ENCODE measurements at regions of chr15 and their contacts with region 1.

Region 1: DNA sequence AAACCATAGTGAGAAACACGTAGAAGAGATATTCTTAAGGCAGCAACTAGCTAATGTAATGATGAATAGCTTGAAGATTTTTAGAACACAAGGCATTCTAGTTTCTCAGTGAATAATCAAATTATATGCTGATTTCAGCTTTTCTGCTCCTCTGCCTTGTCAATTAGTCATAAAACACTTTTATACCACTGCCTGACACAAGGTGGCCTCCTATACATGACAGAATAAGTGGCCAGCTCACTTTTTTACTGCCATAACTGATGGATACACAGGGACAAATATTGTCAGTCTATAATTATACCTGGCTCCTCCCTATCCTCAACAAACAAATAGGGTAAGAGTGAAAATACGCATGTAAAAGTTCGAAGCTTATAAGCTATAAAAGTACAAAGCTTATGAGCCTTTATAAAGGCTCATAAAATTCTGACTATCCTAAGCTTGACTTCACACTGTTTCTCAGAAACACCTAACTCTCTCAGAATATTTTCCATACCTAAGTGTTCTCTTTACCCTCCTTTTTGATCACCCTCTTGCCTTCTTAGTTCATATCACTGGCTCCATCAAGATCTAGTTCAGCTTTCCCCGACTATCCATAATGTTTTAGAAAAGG is 81.6 kb downstream of the HERC1 start:
- DNase-seq: peak; percentile 55
- ATAC-seq: peak; percentile 82
- H3K4me3 Mint-ChIP-seq: no peak overlapping the region
- H3K27ac Mint-ChIP-seq: no peak overlapping the region
- H3K4me1 Mint-ChIP-seq: peaks cover 7% of the 10 kb centered on the region
- H3K27me3 Mint-ChIP-seq: no peaks in the 10 kb centered on the region

Region 2: GRCh38 chr15:63610200-63610841 is 141.9 kb before region 1 on chr15:
- CTCF ChIA-PET with region 1: interaction called, 13 read pairs
- DNase-seq: peak; percentile 92
- ATAC-seq: peak; percentile 89
- H3K4me3 Mint-ChIP-seq: peak overlapping the region; percentile 8
- H3K27ac Mint-ChIP-seq: peak overlapping the region; percentile 94
- H3K4me1 Mint-ChIP-seq: peaks cover 39% of the 10 kb centered on the region
- H3K27me3 Mint-ChIP-seq: no peaks in the 10 kb centered on the region

Region 3: DNA sequence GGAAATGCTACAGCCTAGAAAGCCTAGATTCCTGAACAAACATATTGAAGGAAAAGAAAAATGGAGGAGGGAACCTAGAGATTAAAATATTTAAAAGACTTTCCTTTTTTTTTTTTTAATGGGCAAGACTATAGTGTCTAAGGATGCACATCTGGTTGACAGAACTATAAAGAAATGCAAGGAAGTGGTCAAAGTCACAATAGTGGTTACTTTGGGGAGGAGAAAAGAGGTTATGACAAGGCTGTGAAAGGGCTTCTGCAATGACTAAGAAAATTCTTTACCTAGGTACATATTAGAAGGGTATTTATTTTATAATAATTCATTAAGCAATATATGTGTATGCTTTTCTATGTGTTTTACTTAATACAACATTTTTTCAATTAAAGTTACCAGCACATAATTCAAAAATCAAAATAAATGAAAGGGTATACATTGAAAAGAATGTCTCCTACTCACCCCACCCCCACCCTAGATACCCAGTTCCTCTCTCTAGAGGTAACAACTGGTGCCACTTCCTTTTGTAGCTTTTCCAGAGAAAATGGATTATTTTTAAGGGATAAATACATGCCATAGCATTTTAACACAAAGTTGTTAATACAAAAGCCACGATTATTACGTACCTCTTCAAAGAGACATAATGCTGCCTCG is 11.4 kb after region 1 on chr15:
- CTCF ChIA-PET with region 1: interaction called, 12 read pairs
- DNase-seq: no peak
- ATAC-seq: peak; percentile 98
- H3K4me3 Mint-ChIP-seq: peak overlapping the region; percentile 34
- H3K27ac Mint-ChIP-seq: peak overlapping the region; percentile 64
- H3K4me1 Mint-ChIP-seq: peaks cover 46% of the 10 kb centered on the region
- H3K27me3 Mint-ChIP-seq: no peaks in the 10 kb centered on the region

Region 4: GRCh38 chr15:63891079-63891767 is 139.0 kb after region 1 on chr15:
- CTCF ChIA-PET with region 1: interaction called, 46 read pairs
- DNase-seq: peak; percentile 83
- ATAC-seq: peak; percentile 29
- H3K4me3 Mint-ChIP-seq: no peak overlapping the region
- H3K27ac Mint-ChIP-seq: peak overlapping the region; percentile 87
- H3K4me1 Mint-ChIP-seq: peaks cover 61% of the 10 kb centered on the region
- H3K27me3 Mint-ChIP-seq: no peaks in the 10 kb centered on the region

Region 5: GRCh38 chr15:63945007-63945788 is 193.0 kb after region 1 on chr15:
- CTCF ChIA-PET with region 1: interaction called, 11 read pairs
- DNase-seq: peak; percentile 83
- ATAC-seq: peak; percentile 90
- H3K4me3 Mint-ChIP-seq: no peak overlapping the region
- H3K27ac Mint-ChIP-seq: no peak overlapping the region
- H3K4me1 Mint-ChIP-seq: peaks cover 18% of the 10 kb centered on the region
- H3K27me3 Mint-ChIP-seq: no peaks in the 10 kb centered on the region

Region 6: GRCh38 chr15:64010719-64011118 is 258.5 kb after region 1 on chr15:
- CTCF ChIA-PET with region 1: interaction called, 21 read pairs
- DNase-seq: peak; percentile 96
- ATAC-seq: peak; percentile 94
- H3K4me3 Mint-ChIP-seq: peak overlapping the region; percentile 57
- H3K27ac Mint-ChIP-seq: peak overlapping the region; percentile 91
- H3K4me1 Mint-ChIP-seq: peaks cover 66% of the 10 kb centered on the region
- H3K27me3 Mint-ChIP-seq: no peaks in the 10 kb centered on the region

Region 7: GRCh38 chr15:64067564-64068030 is 315.4 kb after region 1 on chr15:
- CTCF ChIA-PET with region 1: interaction called, 91 read pairs
- DNase-seq: peak; percentile 79
- ATAC-seq: peak; percentile 87
- H3K4me3 Mint-ChIP-seq: no peak overlapping the region
- H3K27ac Mint-ChIP-seq: peak overlapping the region; percentile 57
- H3K4me1 Mint-ChIP-seq: peaks cover 23% of the 10 kb centered on the region
- H3K27me3 Mint-ChIP-seq: no peaks in the 10 kb centered on the region